PC-9 (cell line): ENCODE measurements at regions of chr1 and their contacts with region 1.

Region 1: GRCh38 chr1:53047737-53048732 is 14.0 kb upstream of the PODN start:
- DNase-seq: peak; percentile 76 to 98
- H3K4me3 ChIP-seq: no peak overlapping the region
- H3K27ac ChIP-seq: peak overlapping the region; percentile 74
- H3K4me1 ChIP-seq: peaks cover 47% of the 10 kb centered on the region
- H3K27me3 ChIP-seq: no peaks in the 10 kb centered on the region
- CTCF ChIP-seq: no peak

Region 2: GRCh38 chr1:51392241-51392640 is 1655.8 kb before region 1 on chr1:
- CTCF ChIA-PET with region 1: no interaction called
- POLR2A ChIA-PET with region 1: interaction called, 10 read pairs
- intact Hi-C with region 1: no loop called
- DNase-seq: no peak
- H3K4me3 ChIP-seq: no peak overlapping the region
- H3K27ac ChIP-seq: no peak overlapping the region
- H3K4me1 ChIP-seq: no peaks in the 10 kb centered on the region
- H3K27me3 ChIP-seq: no peaks in the 10 kb centered on the region
- CTCF ChIP-seq: no peak

Region 3: GRCh38 chr1:52651904-52652303 is 396.1 kb before region 1 on chr1:
- CTCF ChIA-PET with region 1: no interaction called
- POLR2A ChIA-PET with region 1: no interaction called
- intact Hi-C with region 1: no loop called
- DNase-seq: no peak
- H3K4me3 ChIP-seq: no peak overlapping the region
- H3K27ac ChIP-seq: no peak overlapping the region
- H3K4me1 ChIP-seq: no peaks in the 10 kb centered on the region
- H3K27me3 ChIP-seq: no peaks in the 10 kb centered on the region
- CTCF ChIP-seq: no peak

Region 4: DNA sequence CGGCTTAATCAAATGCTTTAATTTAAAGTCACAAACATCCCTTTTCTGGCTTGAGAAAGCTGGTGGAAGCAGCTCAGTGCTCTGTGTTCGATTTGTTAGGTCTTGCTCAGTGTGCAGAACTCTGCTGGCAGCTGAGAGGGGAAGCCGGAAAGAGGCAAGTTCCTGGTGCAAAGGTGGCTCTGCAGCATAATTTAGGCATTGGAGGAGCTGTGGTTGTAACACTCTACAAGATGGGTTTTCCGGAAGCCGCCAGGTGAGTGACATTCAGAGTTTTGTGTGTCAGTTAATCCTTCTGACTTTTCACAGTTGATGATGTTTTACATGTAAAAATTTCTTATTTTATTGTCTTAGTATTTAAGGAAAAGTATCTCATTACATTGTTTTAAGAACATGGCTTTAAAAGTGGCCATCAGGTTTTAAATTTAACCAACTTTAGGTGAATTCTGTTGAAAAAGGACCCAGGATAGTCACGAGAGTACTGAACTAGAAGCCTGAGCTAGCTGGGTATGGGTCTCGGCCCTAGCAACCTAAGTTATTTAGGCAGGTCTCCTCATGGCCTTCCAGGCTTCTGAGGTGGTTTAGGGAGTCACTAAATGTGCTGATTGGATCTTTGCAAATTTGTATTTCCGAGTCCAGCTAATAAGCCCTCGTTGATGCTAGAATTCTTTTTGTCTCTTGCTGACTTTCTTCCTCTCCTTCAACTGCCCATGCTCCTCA is 33.1 kb before region 1 on chr1:
- CTCF ChIA-PET with region 1: no interaction called
- POLR2A ChIA-PET with region 1: no interaction called
- intact Hi-C with region 1: loop called (anchors 1 kb)
- DNase-seq: peak; percentile 76 to 85
- H3K4me3 ChIP-seq: peak overlapping the region; percentile 78
- H3K27ac ChIP-seq: peak overlapping the region; percentile 31
- H3K4me1 ChIP-seq: peaks cover 26% of the 10 kb centered on the region
- H3K27me3 ChIP-seq: no peaks in the 10 kb centered on the region
- CTCF ChIP-seq: no peak

Region 5: DNA sequence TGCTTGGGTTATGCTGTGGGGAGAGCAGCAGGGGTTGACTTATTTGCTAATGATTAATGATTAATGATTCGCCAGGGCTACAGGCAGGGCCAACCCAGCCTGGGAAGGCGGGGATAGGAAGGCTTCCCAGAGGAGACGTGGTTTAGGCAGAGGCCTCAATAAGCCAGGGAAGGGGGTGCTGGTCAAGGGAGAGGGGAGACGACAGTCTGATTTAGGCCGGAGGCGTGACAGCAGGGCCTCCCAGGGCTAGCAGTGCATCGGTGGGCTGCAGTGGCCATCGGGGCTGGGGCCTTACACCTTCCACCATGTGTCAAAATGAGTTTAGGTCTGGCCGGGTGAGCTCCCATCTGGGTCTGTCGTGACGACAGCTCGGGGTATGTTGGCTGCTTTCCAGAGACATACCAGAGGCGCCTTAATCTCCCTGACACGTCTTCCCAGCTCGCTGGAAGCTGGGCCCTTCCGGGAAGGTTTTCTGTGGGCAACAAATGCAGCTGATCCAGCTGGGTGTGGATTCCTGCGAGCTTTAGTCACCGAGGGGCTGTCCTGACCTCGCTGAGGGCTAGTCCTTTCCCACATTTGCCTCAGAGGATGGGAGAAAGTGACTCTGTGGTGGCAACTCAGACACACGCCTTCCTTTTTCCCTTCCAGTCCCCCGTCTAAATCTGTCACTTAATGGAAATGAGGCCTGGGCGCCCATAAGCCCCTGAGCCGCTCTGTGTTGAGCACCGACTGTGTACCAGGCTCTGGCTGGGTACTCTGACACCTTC is 98.1 kb after region 1 on chr1:
- CTCF ChIA-PET with region 1: interaction called, 5 read pairs
- POLR2A ChIA-PET with region 1: interaction called, 5 read pairs
- intact Hi-C with region 1: loop called (anchors 1 kb)
- DNase-seq: peak; percentile 96 to 98
- H3K4me3 ChIP-seq: no peak overlapping the region; the same call in 1 of the 2 replicates
- H3K27ac ChIP-seq: peak overlapping the region; percentile 75
- H3K4me1 ChIP-seq: peaks cover 32% of the 10 kb centered on the region
- H3K27me3 ChIP-seq: no peaks in the 10 kb centered on the region
- CTCF ChIP-seq: no peak

Region 6: GRCh38 chr1:53182111-53182593 is 134.1 kb after region 1 on chr1:
- CTCF ChIA-PET with region 1: no interaction called
- POLR2A ChIA-PET with region 1: no interaction called
- intact Hi-C with region 1: loop called (anchors 5 kb)
- DNase-seq: peak; percentile 63 to 79
- H3K4me3 ChIP-seq: no peak overlapping the region
- H3K27ac ChIP-seq: no peak overlapping the region
- H3K4me1 ChIP-seq: peaks cover 3% of the 10 kb centered on the region; the same call in 1 of the 2 replicates
- H3K27me3 ChIP-seq: no peaks in the 10 kb centered on the region
- CTCF ChIP-seq: peak; percentile 93